ENCODE measurements at regions of chr11 and their contacts with region 1.

Region 1: DNA sequence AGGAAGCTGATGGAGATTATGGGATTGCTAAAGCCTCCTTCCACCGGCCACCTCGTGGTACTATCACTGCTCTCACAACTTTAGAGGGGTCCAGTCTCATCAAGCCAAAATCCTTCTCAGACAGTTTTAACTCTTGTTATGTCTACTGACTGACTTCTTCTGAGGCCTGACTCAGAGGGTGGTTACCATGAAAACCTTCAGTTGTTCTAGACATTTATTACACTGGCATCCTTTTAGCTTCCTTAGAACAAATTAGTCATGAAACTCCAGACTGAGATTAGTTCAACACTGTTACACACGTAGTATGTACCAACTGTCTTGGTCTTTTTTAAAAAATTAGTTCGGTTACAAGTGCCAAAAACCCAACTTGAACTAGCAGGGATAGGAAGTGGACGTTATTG is 7.5 kb downstream of the DIXDC1 start:
- DNase-seq: peak; percentile 43
- H3K4me3 Mint-ChIP-seq: peak overlapping the region; percentile 37
- H3K27ac Mint-ChIP-seq: peak overlapping the region; percentile 94
- H3K4me1 Mint-ChIP-seq: peaks cover 38% of the 10 kb centered on the region
- H3K27me3 Mint-ChIP-seq: no peaks in the 10 kb centered on the region

Region 2: DNA sequence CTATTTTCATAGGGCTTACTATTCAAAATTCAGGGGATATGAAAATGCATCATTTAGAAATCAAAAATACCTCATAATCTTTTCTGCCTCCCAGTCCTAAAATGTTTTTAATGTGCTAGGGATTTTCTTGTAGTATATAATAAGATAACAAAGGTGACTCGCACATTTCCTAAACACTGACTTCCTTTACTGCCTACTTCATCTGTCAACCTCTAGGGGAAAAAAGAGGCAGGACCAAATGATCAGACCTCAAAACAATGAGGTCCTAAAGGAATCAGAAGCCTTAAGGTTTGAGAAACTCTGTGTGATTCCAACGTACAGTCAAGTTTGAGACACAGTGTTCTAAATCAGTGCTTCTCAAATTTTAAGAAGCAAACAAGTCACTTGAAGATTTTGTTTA is 755.2 kb before region 1 on chr11:
- CTCF ChIA-PET with region 1: no interaction called
- POLR2A ChIA-PET with region 1: no interaction called
- intact Hi-C with region 1: no loop called
- DNase-seq: no peak
- H3K4me3 Mint-ChIP-seq: no peak overlapping the region
- H3K27ac Mint-ChIP-seq: no peak overlapping the region
- H3K4me1 Mint-ChIP-seq: no peaks in the 10 kb centered on the region
- H3K27me3 Mint-ChIP-seq: peaks cover 16% of the 10 kb centered on the region

Region 3: DNA sequence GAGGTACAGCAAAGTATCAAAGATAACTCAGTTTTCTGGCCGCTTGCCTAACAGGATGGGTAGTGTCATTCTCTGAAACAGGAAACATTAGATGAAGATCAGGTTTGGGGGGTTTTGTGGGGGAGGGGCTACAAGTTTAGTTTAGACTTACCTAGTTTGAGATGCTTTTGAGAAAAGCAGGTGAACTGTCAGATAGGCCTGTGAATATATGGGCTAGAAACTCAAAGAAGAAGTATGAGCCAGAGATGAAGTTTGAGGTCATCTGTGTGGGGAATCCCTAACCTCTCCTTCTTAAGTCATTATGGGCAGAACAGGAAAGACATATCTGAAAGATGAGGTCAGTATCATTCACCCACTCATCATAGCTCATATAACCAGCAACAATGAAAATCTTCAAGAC is 418.1 kb before region 1 on chr11:
- CTCF ChIA-PET with region 1: no interaction called
- POLR2A ChIA-PET with region 1: no interaction called
- intact Hi-C with region 1: loop called (anchors 5 kb)
- DNase-seq: peak; percentile 43
- H3K4me3 Mint-ChIP-seq: no peak overlapping the region
- H3K27ac Mint-ChIP-seq: no peak overlapping the region
- H3K4me1 Mint-ChIP-seq: peaks cover 28% of the 10 kb centered on the region
- H3K27me3 Mint-ChIP-seq: peaks cover 15% of the 10 kb centered on the region

Region 4: GRCh38 chr11:111926505-111927391 is 17.9 kb before region 1 on chr11:
- CTCF ChIA-PET with region 1: interaction called, 15 read pairs
- POLR2A ChIA-PET with region 1: interaction called, 13 read pairs
- intact Hi-C with region 1: loop called (anchors 1 kb)
- DNase-seq: peak; percentile 98
- H3K4me3 Mint-ChIP-seq: peak overlapping the region; percentile 84
- H3K27ac Mint-ChIP-seq: peak overlapping the region; percentile 86
- H3K4me1 Mint-ChIP-seq: peaks cover 13% of the 10 kb centered on the region
- H3K27me3 Mint-ChIP-seq: no peaks in the 10 kb centered on the region

Region 5: DNA sequence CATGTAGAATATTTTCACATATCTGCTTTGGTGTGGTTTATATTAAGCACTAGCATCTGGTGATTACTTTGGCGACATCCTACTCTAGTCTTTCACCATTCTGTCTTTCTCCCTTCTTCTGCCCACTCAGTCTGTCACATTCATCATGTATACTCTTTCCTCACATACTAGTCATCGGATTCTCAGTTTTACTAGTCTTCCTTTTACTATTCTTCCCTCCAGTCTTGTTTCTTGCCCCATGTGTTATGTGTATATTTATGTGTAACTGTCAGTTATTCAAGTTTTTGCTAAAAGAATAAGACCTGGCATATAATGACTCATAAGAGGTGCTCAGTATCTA is 12.1 kb before region 1 on chr11:
- CTCF ChIA-PET with region 1: interaction called, 17 read pairs
- POLR2A ChIA-PET with region 1: interaction called, 13 read pairs
- intact Hi-C with region 1: loop called (anchors 1 kb)
- DNase-seq: no peak
- H3K4me3 Mint-ChIP-seq: peak overlapping the region; percentile 53
- H3K27ac Mint-ChIP-seq: peak overlapping the region; percentile 87
- H3K4me1 Mint-ChIP-seq: peaks cover 32% of the 10 kb centered on the region
- H3K27me3 Mint-ChIP-seq: no peaks in the 10 kb centered on the region

Region 6: GRCh38 chr11:111963931-111964340 is 19.3 kb after region 1 on chr11:
- CTCF ChIA-PET with region 1: interaction called, 3 read pairs
- POLR2A ChIA-PET with region 1: interaction called, 6 read pairs
- intact Hi-C with region 1: loop called (anchors 1 kb)
- DNase-seq: peak; percentile 56
- H3K4me3 Mint-ChIP-seq: no peak overlapping the region
- H3K27ac Mint-ChIP-seq: no peak overlapping the region
- H3K4me1 Mint-ChIP-seq: peaks cover 8% of the 10 kb centered on the region
- H3K27me3 Mint-ChIP-seq: no peaks in the 10 kb centered on the region

Region 7: DNA sequence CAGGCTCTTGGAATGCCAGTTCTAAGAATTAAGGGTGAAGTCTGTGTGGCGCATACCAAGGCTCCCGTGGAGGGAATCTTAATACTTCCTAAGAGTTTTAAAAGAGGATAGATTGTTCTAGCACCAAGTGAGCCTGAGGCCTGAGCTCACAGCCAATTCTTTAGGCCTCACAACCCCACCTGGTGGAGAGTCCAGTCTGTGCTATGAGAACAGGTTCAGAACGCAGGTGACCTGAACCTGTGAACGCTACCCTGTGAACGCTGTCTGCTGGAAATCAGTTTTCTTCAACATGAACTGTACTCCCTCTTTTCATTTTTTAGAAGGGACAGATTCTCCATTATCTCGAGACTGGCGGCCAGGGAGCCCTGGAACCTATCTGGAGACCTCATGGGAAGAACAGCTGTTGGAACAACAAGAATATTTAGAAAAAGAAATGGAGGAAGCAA is 37.4 kb after region 1 on chr11:
- CTCF ChIA-PET with region 1: interaction called, 190 read pairs
- POLR2A ChIA-PET with region 1: no interaction called
- intact Hi-C with region 1: no loop called
- DNase-seq: peak; percentile 72
- H3K4me3 Mint-ChIP-seq: no peak overlapping the region
- H3K27ac Mint-ChIP-seq: no peak overlapping the region
- H3K4me1 Mint-ChIP-seq: peaks cover 10% of the 10 kb centered on the region
- H3K27me3 Mint-ChIP-seq: peaks cover 18% of the 10 kb centered on the region

Region 8: DNA sequence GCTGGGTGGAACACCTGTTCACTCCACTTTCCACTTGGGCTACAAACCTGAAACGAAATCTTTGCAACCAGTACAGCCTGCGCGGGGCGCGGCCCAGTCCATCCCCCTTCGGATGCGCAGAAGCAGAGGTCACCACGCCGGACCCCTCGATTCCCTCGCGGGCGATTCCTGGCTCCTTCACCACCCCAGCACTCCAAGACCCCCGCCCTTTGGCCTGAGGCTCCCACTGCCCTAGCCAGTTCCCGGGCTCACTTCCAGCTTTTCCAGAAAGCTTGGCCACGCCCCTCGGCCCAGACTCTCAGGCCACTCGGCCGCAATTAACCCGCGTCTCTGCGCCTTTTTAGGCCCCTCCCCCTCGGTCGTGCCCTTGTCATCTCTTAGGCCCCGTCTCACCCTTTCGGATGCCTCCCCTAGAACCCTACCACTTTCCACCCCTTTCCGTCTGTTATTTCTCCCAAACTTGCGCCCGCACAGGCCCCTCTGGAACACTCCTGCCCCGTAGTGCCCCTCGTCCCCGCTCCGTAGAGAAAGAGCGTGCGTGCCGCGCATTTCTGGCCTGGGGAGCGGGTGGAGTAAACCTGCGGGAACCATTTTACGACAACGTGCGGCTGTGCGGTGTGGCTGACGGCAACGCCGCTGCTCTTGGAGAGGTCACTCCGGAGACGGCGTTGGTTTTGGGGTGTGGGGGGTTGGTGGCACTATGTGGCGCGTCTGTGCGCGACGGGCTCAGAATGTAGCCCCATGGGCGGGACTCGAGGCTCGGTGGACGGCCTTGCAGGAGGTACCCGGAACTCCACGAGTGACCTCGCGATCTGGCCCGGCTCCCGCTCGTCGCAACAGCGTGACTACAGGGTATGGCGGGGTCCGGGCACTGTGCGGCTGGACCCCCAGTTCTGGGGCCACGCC is 80.4 kb after region 1 on chr11 and contains the start of gene DLAT:
- CTCF ChIA-PET with region 1: interaction called, 4 read pairs
- POLR2A ChIA-PET with region 1: no interaction called
- intact Hi-C with region 1: loop called (anchors 2 kb)
- DNase-seq: peak; percentile 92
- H3K4me3 Mint-ChIP-seq: peak within 1 kb of the TSS; percentile 98
- H3K27ac Mint-ChIP-seq: peak within 1 kb of the TSS; percentile 98
- H3K4me1 Mint-ChIP-seq: peaks cover 21% of the 10 kb centered on the region
- H3K27me3 Mint-ChIP-seq: no peaks in the 10 kb centered on the region
- total RNA-seq, gene DLAT: 36.4 to 39.0 TPM

Region 9: GRCh38 chr11:112211536-112211935 is 266.9 kb after region 1 on chr11:
- CTCF ChIA-PET with region 1: no interaction called
- POLR2A ChIA-PET with region 1: no interaction called
- intact Hi-C with region 1: no loop called
- DNase-seq: no peak
- H3K4me3 Mint-ChIP-seq: no peak overlapping the region
- H3K27ac Mint-ChIP-seq: no peak overlapping the region
- H3K4me1 Mint-ChIP-seq: peaks cover 2% of the 10 kb centered on the region
- H3K27me3 Mint-ChIP-seq: peaks cover 2% of the 10 kb centered on the region

Region 10: DNA sequence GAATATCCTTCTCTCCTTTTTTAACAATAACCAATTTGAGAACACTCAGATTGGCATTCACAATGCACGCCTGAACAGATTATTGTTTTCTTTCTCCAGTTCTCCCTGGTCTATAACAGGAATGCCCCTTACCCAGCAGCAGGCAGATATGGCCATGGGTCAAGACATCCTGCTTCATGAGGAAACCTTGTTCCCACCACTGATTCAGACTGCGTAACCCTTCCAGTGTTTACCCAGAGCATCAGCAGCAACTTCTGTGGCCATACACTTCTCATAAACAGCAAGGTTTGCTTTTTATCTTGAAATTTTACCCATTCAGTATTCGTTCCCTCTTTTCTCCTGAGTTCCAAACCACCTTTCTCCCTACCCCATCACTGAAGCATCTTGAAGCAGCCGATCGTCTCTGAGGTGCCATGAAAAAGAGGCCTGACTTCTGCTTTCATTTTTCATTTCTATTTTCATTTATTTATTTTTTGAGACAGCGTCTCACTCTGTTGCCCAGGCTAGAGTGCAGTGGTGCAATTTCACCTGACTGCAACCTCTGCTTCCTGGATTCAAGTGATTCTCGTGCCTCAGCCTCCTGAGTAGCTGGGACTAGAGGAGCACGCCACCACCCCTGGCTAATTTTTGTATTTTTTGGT is 291.2 kb after region 1 on chr11:
- CTCF ChIA-PET with region 1: no interaction called
- POLR2A ChIA-PET with region 1: no interaction called
- intact Hi-C with region 1: no loop called
- DNase-seq: no peak
- H3K4me3 Mint-ChIP-seq: no peak overlapping the region
- H3K27ac Mint-ChIP-seq: no peak overlapping the region
- H3K4me1 Mint-ChIP-seq: no peaks in the 10 kb centered on the region
- H3K27me3 Mint-ChIP-seq: no peaks in the 10 kb centered on the region

Measured in activated CD4-positive, alpha-beta memory T cell treated with anti-CD3 and anti-CD28 coated beads for 36 hours (primary cell).